Activated naive CD4-positive, alpha-beta T cell treated with anti-CD3 and anti-CD28 coated beads for 36 hours (primary cell): ENCODE measurements at regions of chr10 and their contacts with region 1.

Region 1: DNA sequence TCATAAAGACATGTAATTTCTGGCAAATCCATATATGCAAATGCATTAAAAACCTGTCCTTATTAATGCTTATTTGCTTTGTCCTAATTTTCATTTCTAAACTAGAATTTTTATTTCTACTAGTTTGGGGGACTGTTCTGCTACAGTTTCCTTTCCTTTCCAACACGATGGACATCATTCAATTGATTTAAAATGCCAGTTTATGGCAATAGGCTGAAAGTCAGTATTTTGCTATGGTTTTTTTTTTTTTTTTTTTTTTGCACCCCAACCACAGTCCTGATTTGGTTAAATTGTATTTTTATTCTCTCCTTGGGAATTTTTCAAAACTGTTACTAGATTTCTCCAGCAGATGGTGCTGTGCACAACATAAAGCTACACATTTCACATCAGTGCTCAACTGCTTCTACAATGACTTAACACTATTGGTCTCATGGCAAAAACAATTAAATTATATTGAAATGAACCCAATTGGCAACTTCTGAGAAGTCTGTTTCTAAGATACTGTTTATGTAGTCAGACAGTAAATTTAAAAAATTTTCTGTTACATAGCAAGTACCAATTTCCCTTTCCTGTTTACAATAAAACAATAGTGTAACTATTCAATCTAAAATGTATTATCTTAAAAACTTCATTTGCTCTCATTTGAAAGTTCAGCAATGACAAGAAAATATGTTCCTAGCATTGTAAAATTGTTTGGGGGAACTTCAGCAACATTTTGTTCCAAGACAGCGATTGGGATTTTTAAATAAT is 193.8 kb upstream of the CCDC6 start:
- DNase-seq: peak; percentile 8
- H3K4me3 Mint-ChIP-seq: no peak overlapping the region
- H3K27ac Mint-ChIP-seq: no peak overlapping the region
- H3K4me1 Mint-ChIP-seq: no peaks in the 10 kb centered on the region
- H3K27me3 Mint-ChIP-seq: no peaks in the 10 kb centered on the region

Region 2: GRCh38 chr10:60069311-60069710 is 30.9 kb before region 1 on chr10:
- CTCF ChIA-PET with region 1: no interaction called
- intact Hi-C with region 1: no loop called
- DNase-seq: no peak
- H3K4me3 Mint-ChIP-seq: no peak overlapping the region
- H3K27ac Mint-ChIP-seq: no peak overlapping the region
- H3K4me1 Mint-ChIP-seq: no peaks in the 10 kb centered on the region
- H3K27me3 Mint-ChIP-seq: no peaks in the 10 kb centered on the region

Region 3: GRCh38 chr10:60082744-60083344 is 17.3 kb before region 1 on chr10:
- CTCF ChIA-PET with region 1: no interaction called
- intact Hi-C with region 1: no loop called
- DNase-seq: no peak
- H3K4me3 Mint-ChIP-seq: no peak overlapping the region
- H3K27ac Mint-ChIP-seq: no peak overlapping the region
- H3K4me1 Mint-ChIP-seq: no peaks in the 10 kb centered on the region
- H3K27me3 Mint-ChIP-seq: no peaks in the 10 kb centered on the region

Region 4: DNA sequence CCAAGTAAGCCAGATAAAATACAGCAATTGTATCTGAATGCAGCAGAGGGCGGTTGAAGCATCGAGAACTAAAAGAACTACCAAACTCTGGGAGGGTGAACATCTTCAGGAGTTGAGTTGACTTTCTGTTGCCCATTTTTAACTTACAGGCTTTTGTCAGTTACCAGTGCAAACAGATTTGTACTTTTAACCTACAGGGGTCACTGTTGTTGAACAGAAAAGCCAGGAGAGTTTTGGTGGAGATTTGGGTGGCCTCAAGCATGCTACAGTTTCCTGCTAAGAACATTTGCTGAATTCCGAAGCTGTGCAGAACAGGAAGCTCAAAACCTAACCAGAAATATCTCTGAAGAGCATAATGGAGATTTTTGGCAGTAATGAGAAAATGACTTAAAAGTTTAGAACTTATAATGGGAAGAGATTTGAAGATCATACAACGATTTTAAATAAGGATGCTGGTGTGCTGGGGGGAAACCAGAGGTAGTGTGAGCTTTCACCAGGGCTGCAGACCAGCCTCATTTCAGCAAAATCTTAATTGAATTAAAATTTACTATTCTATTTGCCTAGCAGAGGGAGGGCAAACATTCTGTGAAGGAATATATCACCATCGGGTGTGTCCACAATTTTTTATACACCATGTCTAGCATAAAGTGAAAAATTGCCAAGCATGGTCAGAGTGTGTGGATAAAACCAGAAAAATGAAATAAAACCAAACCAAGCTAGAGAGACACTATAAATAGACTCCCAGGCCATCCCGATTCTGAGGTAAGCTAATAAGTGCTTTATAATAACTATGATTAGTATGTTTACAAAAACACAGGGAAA is 14.8 kb after region 1 on chr10:
- CTCF ChIA-PET with region 1: interaction called, 15 read pairs
- intact Hi-C with region 1: no loop called
- DNase-seq: peak; percentile 8
- H3K4me3 Mint-ChIP-seq: no peak overlapping the region
- H3K27ac Mint-ChIP-seq: no peak overlapping the region
- H3K4me1 Mint-ChIP-seq: no peaks in the 10 kb centered on the region
- H3K27me3 Mint-ChIP-seq: no peaks in the 10 kb centered on the region

Region 5: DNA sequence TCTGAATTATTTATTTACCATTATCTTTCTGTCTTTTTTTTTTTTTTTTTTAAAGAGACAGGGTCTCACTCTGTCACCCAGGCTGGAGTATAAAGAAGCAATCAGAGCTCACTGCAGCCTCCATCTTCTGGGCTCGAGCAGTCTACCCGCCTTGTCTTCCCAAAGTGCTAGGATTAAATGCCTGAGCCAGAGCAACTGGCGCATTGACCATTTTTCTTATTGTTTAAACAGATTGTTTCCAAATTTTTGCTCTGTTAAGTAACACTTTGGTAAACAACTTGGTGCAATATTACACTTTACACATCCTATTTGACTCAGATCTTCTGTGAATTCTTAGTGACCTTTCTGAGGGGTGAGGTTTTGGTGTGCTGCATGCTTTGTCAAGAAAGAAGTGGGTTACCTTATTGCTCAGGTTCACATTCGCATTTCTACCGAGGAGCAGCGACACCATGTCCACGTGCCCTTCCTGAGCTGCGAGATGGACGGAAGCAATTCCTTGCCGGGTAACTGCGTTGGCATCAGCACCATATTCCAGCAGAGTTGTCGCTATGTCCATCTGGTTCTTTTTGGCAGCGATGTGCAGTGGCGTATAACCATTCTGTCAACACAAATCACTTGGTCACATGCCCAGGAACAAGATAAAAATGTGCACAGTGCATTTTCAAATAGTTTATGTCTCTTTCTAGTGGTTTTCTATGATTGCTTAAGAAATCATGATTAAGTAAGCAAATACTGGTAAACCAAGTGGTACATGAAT is 86.3 kb after region 1 on chr10:
- CTCF ChIA-PET with region 1: no interaction called
- intact Hi-C with region 1: no loop called
- DNase-seq: no peak
- H3K4me3 Mint-ChIP-seq: no peak overlapping the region
- H3K27ac Mint-ChIP-seq: no peak overlapping the region
- H3K4me1 Mint-ChIP-seq: no peaks in the 10 kb centered on the region
- H3K27me3 Mint-ChIP-seq: no peaks in the 10 kb centered on the region

Region 6: DNA sequence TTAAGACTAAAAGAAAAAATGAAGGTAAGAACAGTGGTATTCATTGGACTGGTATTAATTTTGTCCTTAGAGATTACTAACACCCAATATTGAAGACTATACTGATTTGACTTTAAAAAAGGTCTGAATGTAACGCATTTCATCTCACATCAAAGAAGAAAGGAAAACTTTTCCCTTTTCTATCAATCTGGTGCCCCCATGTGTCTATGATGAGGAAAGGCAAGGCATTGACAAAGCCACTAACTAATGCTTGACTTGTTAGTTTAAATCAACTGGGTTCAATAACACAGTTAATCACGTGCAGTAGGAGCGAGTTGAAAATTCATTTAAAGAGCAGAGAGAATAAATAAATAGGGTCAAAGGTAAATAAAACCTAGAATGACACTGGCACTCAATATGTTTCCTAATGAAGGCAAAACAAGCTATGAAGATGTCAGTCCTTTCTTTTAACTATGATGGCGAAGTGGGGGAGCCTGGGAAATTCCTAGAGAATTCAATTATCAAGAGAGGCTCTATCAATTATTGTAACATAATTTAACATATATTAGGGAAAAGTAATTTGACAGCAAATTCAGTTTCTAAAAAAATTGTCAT is 108.6 kb after region 1 on chr10:
- CTCF ChIA-PET with region 1: interaction called, 3 read pairs
- intact Hi-C with region 1: loop called (anchors 1 kb)
- DNase-seq: no peak
- H3K4me3 Mint-ChIP-seq: no peak overlapping the region
- H3K27ac Mint-ChIP-seq: no peak overlapping the region
- H3K4me1 Mint-ChIP-seq: peaks cover 17% of the 10 kb centered on the region
- H3K27me3 Mint-ChIP-seq: no peaks in the 10 kb centered on the region

Region 7: GRCh38 chr10:62011558-62011957 is 1911.4 kb after region 1 on chr10:
- CTCF ChIA-PET with region 1: no interaction called
- intact Hi-C with region 1: no loop called
- DNase-seq: no peak
- H3K4me3 Mint-ChIP-seq: no peak overlapping the region
- H3K27ac Mint-ChIP-seq: peak overlapping the region; percentile 4
- H3K4me1 Mint-ChIP-seq: peaks cover 55% of the 10 kb centered on the region
- H3K27me3 Mint-ChIP-seq: no peaks in the 10 kb centered on the region